SK-N-SH (cell line): ENCODE measurements at regions of chr16 and their contacts with region 1.

Region 1: DNA sequence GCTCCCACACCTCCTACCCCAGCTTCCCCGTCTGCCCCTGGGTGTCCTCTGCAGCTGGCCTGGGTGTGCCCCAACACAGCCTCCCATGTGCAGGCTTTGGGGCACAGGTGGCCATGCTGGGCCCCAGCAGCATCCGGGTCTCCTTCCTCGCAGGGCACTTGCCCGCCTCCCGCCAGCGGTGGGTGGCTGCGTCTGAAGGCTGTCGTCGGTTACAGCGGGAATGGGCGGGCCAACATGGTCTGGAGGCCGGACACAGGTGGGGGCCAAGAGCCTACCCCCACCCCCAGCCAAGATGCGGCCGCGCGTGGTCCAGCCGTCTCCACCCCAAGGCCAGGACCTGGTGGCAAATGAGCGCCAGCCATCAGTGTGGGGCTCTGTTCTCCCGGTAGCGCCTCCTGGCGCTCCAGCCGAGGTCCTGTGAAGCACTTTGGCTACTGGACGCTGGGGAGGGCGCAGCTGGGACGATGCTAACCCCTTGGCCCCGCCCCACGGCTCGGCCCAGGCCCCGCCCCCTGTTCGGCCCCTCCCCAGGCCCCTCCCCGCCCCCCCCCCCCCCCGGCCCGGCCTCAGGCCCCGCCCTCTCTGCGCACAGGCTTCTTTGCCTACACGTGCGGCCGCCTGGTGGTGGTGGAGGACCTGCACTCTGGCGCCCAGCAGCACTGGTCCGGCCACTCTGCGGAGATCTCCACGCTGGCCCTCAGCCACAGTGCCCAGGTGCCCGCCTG is 7.3 kb upstream of the RHOT2 start:
- DNase-seq: peak; percentile 98
- H3K4me3 ChIP-seq: peak overlapping the region in 1 of 2 experiments; percentile 40; a peak in 2 of 4 replicates
- H3K27ac ChIP-seq: peak overlapping the region; percentile 45 to 96
- H3K4me1 ChIP-seq: peaks cover 3 to 35% of the 10 kb centered on the region in 2 experiments; a peak in 3 of 4 replicates
- H3K27me3 ChIP-seq: no peaks in the 10 kb centered on the region
- CTCF ChIP-seq: peak; percentile 55
- EP300 ChIP-seq: no peak; a peak in 1 of 4 replicates
- RAD21 ChIP-seq: peak; percentile 14; the same call in 1 of the 2 replicates

Region 2: GRCh38 chr16:642189-643055 is 18.2 kb before region 1 on chr16:
- CTCF ChIA-PET with region 1: interaction called, 92 read pairs
- POLR2A ChIA-PET with region 1: interaction called, 5 read pairs
- DNase-seq: peak; percentile 70
- H3K4me3 ChIP-seq: peak overlapping the region; percentile 73 to 76
- H3K27ac ChIP-seq: peak overlapping the region in 1 of 2 experiments; percentile 61; a peak in 1 of 4 replicates
- H3K4me1 ChIP-seq: peaks cover 6 to 35% of the 10 kb centered on the region in 2 experiments; a peak in 2 of 4 replicates
- H3K27me3 ChIP-seq: no peaks in the 10 kb centered on the region
- CTCF ChIP-seq: no peak
- EP300 ChIP-seq: no peak
- RAD21 ChIP-seq: no peak

Region 3: GRCh38 chr16:674968-675883 is 14.6 kb after region 1 on chr16 and contains the start of gene RHBDL1:
- CTCF ChIA-PET with region 1: interaction called, 20 read pairs
- POLR2A ChIA-PET with region 1: interaction called, 5 read pairs
- DNase-seq: peak; percentile 80
- H3K4me3 ChIP-seq: peak within 1 kb of the TSS in 1 of 2 experiments; percentile 27; a peak in 1 of 4 replicates
- H3K27ac ChIP-seq: no peak within 1 kb of the TSS; a peak in 1 of 4 replicates
- H3K4me1 ChIP-seq: peaks cover 4 to 16% of the 10 kb centered on the region in 2 experiments; a peak in 2 of 4 replicates
- H3K27me3 ChIP-seq: no peaks in the 10 kb centered on the region
- CTCF ChIP-seq: no peak
- EP300 ChIP-seq: no peak
- RAD21 ChIP-seq: no peak
- polyA plus RNA-seq, gene RHBDL1: 4.1 and 6.8 TPM in 2 replicates

Region 4: DNA sequence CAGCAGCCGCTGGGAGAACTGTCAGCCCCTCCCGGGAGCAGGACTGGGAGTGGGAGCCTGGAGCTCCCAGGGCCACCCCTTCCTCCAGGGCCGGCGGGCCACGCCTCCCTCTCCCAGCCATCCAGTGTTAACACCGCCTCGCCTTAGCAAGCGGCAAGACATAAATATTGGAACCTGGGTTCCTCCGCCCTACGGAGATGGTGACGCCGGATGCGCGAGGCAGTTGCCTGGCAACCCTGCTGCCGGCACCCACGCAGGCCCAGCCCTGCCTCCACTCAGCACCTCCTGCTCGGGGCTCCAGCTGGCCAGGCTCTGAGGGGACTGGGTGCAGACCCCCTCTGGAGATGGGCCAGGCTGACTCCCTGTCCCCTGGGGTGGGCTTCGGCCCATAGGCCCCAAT is 464.9 kb after region 1 on chr16:
- CTCF ChIA-PET with region 1: no interaction called
- POLR2A ChIA-PET with region 1: no interaction called
- DNase-seq: no peak
- H3K4me3 ChIP-seq: no peak overlapping the region
- H3K27ac ChIP-seq: no peak overlapping the region
- H3K4me1 ChIP-seq: no peaks in the 10 kb centered on the region
- H3K27me3 ChIP-seq: peaks cover 46% of the 10 kb centered on the region
- CTCF ChIP-seq: no peak
- EP300 ChIP-seq: no peak
- RAD21 ChIP-seq: no peak